ENCODE measurements at regions of chr5 and their contacts with region 1.

Region 1: DNA sequence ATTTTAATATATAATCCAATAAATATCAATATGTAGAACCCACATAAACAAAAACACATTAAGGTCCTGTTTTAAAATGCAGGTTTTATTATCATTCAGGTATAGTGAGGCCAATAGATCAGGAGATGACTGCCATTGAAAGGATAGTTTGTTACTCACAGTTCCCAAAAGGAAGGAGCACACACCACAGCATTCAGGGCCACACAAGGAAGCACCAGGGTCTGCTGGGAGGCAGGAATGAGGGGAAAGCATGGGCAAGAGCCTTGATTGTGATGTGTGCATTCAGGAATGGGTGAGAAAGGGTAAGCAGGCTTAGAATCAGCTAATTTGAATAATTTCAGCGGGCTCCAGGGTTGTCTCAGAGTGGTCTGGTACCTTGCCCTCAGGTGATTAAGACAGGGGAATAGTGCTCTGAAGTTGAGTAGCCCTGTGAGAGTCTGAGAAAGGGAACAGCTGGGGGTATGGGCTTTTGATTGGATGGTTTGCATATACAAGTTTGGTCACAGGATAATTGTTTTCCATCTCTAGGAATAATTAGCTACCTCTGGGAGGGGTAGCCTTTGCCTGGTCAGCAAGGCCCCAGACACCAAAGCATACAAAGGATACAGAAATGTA is 19.8 kb upstream of the OTULIN start:
- DNase-seq: no peak
- ATAC-seq: peak; percentile 74
- H3K4me3 Mint-ChIP-seq: no peak overlapping the region
- H3K27ac Mint-ChIP-seq: peak overlapping the region; percentile 71; the same call in 1 of the 2 replicates
- H3K4me1 Mint-ChIP-seq: peaks cover 10% of the 10 kb centered on the region
- H3K27me3 Mint-ChIP-seq: no peaks in the 10 kb centered on the region
- CTCF ChIP-seq: no peak

Region 2: GRCh38 chr5:13976867-13977830 is 667.6 kb before region 1 on chr5:
- CTCF ChIA-PET with region 1: interaction called, 11 read pairs
- POLR2A ChIA-PET with region 1: no interaction called
- DNase-seq: no peak
- ATAC-seq: peak; percentile 87
- H3K4me3 Mint-ChIP-seq: no peak overlapping the region
- H3K27ac Mint-ChIP-seq: no peak overlapping the region
- H3K4me1 Mint-ChIP-seq: 0 out of 2 replicates have a peak, but pooled peaks cover 6% of the 10 kb centered on the region
- H3K27me3 Mint-ChIP-seq: no peaks in the 10 kb centered on the region; the same call in 1 of the 2 replicates
- CTCF ChIP-seq: no peak

Region 3: GRCh38 chr5:14351845-14352712 is 292.7 kb before region 1 on chr5:
- CTCF ChIA-PET with region 1: interaction called, 29 read pairs
- POLR2A ChIA-PET with region 1: no interaction called
- DNase-seq: peak; percentile 64
- ATAC-seq: peak; percentile 93
- H3K4me3 Mint-ChIP-seq: no peak overlapping the region
- H3K27ac Mint-ChIP-seq: no peak overlapping the region
- H3K4me1 Mint-ChIP-seq: peaks cover 29% of the 10 kb centered on the region
- H3K27me3 Mint-ChIP-seq: no peaks in the 10 kb centered on the region
- CTCF ChIP-seq: peak; percentile 93

Region 4: DNA sequence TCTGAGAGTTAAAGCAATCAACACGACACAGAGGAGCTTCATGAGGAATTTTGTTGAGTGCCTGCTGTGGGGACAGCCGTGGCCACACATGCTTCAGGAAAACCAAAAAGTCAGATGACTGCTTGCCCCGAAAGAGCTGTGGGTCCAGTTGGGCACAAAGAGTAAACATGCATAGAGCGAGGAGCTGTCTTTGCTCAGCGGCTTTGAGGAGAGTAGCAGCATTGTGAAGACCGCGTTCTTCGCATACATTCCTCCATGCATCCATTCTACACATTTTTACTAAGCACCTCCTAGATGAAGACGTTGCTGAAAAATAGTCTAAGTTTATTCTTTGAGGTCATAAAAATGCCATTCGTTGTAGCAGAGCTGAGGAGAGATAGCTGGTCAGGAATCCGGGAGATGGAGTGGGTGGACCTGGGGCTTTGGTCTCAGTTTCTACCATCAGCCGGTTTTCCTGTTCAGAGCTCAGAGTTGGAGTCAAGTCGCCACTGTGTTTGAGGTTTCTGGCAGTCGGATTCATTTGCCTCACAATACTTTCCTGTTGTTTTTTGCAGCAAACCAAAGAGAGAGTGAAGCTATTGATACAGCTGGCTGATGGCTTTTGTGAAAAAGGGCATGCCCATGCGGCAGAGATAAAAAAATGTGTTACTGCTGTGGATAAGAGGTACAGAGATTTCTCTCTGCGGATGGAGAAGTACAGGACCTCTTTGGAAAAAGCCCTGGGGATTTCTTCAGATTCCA is 257.7 kb before region 1 on chr5:
- CTCF ChIA-PET with region 1: interaction called, 11 read pairs
- POLR2A ChIA-PET with region 1: no interaction called
- DNase-seq: no peak
- ATAC-seq: peak; percentile 72
- H3K4me3 Mint-ChIP-seq: no peak overlapping the region
- H3K27ac Mint-ChIP-seq: peak overlapping the region; percentile 74
- H3K4me1 Mint-ChIP-seq: peaks cover 32% of the 10 kb centered on the region
- H3K27me3 Mint-ChIP-seq: no peaks in the 10 kb centered on the region
- CTCF ChIP-seq: no peak

Region 5: DNA sequence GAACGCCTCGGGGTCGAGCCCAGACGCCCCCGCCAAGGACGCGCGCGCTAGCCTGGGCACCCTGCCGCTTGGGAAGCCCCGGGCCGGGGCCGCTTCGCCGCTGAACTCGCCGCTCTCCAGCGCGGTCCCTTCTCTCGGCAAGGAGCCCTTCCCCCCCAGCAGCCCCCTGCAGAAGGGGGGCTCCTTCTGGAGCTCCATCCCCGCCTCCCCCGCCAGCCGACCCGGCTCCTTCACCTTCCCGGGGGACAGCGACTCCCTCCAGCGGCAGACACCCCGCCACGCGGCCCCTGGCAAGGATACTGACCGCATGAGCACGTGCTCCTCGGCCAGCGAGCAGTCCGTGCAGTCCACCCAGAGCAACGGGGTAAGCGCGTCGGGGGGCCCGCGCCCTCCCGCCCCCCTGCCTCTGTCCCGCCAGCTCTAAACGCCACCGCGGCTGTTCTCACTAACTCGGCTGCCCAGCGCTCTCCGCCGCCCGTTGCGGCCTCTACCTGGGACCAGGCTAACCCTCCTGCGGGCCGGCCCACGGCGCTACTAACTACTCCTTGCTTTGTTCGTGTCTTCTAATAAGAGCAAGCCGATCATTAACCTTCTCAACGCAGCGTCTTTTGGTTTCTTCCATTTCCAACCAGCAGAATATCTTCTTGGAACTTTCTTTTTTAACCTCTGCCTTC is 156.7 kb before region 1 on chr5:
- CTCF ChIA-PET with region 1: interaction called, 12 read pairs
- POLR2A ChIA-PET with region 1: no interaction called
- DNase-seq: peak; percentile 54
- ATAC-seq: peak; percentile 50
- H3K4me3 Mint-ChIP-seq: peak overlapping the region; percentile 35
- H3K27ac Mint-ChIP-seq: no peak overlapping the region
- H3K4me1 Mint-ChIP-seq: peaks cover 5% of the 10 kb centered on the region
- H3K27me3 Mint-ChIP-seq: no peaks in the 10 kb centered on the region
- CTCF ChIP-seq: no peak

Region 6: DNA sequence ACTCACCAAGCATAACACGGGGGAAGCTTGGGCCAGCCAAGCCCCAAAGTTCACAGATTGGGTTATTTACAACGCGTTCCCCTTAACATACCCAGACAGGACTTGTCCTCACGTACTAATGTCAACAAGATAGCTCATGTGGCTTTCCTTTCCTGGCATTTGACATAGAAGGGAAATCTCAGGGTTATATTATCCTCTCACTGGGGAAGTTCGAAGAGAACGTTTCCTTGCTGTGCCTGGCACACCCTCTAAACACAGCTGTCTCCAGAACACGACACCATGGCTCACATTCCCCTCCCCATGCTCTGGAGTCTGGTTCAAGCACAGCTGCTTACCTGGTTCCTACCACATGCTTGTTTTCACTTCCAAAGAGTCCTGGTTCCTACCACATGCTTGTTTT is 110.0 kb before region 1 on chr5:
- CTCF ChIA-PET with region 1: interaction called, 12 read pairs
- POLR2A ChIA-PET with region 1: no interaction called
- DNase-seq: no peak
- ATAC-seq: peak; percentile 84
- H3K4me3 Mint-ChIP-seq: no peak overlapping the region
- H3K27ac Mint-ChIP-seq: peak overlapping the region; percentile 64
- H3K4me1 Mint-ChIP-seq: peaks cover 9% of the 10 kb centered on the region
- H3K27me3 Mint-ChIP-seq: no peaks in the 10 kb centered on the region; the same call in 1 of the 2 replicates
- CTCF ChIP-seq: no peak

Region 7: DNA sequence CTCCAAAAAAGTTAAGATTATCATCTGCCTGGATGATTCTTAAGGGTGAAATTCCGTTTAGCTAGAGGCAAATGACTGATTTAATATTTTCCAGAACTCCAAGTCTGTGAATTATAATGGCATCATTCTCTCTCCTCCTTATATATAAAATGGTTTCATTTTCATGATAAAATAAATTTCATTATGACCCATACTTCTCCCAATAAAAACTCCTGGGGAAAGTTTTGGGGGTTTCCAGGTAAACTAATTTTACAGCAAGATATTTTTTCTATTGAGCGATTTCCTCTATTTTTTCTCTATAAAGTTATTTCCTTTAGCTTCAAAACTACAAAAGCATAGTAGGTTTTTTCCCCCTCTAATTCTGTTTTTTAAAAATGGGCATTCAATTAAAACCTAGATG is 12.2 kb after region 1 on chr5:
- CTCF ChIA-PET with region 1: interaction called, 11 read pairs
- POLR2A ChIA-PET with region 1: no interaction called
- DNase-seq: no peak
- ATAC-seq: no peak
- H3K4me3 Mint-ChIP-seq: no peak overlapping the region
- H3K27ac Mint-ChIP-seq: no peak overlapping the region
- H3K4me1 Mint-ChIP-seq: no peaks in the 10 kb centered on the region
- H3K27me3 Mint-ChIP-seq: peaks cover 3% of the 10 kb centered on the region; the same call in 1 of the 2 replicates
- CTCF ChIP-seq: no peak

Region 8: DNA sequence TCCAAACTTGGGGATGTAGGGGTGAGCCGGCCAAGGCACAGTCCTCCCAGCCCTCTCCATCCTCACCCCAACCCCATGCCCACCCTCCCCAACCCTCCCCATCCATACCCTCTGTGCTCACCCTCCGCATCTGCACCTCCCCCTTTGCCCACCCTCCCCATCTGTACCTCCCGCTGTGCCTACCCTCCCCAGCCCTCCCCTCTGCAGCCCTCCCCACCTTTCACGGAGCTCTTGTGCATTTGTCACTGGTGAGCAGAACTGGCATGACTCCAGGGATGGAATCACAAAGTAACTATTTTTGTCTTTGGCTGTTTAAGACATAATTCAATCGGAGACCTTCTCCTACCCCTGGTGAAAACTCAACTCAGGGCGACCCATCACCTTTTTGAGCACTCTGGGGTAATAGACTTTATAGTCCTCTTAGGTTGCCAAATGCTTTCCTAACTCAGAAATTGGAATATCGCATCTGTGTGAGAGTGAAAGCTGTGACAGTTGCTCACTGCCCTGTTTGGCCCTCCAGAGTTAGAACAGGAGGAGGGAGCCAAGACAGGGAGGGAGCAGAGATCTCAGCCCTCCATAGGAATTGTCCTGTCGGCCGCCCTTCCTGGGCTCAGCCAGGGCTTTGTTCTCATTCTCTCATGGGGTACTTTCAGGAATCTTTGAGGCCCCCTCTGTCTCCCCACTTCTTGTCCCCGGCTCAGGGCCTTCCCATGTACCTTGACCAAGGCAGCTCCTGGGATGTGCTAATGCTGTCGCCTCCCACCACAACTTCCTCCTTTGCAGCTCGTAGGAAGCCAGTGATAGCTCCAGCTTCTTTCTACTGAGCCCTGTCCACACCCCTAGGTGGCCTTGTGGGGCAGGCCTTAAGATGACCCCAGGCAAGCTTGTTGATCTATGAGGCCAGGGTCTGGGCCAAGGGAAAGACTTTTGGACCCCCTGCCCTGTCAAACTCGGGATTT is 56.0 kb after region 1 on chr5:
- CTCF ChIA-PET with region 1: no interaction called
- POLR2A ChIA-PET with region 1: no interaction called
- DNase-seq: no peak
- ATAC-seq: no peak
- H3K4me3 Mint-ChIP-seq: no peak overlapping the region
- H3K27ac Mint-ChIP-seq: no peak overlapping the region
- H3K4me1 Mint-ChIP-seq: peaks cover 9% of the 10 kb centered on the region
- H3K27me3 Mint-ChIP-seq: no peaks in the 10 kb centered on the region
- CTCF ChIP-seq: no peak

Region 9: DNA sequence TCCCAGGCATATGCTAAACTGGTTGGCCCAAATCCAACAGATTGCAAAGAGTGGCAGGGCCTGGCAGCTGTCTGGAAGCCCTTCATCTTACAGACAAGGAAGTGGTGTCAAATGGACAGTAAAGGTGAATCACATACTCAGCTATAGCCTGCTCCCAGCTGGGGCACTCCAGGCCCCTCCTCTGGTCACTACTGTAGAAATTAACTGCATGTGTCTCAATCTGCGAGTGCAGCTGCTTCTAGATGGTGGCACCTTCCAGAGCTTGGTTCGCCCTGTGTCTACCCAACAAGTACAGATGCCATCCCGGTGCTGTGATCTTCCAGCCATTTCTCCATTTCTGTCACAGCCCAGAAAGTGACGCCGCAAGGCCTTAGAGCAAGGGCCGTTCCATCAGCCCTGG is 70.0 kb after region 1 on chr5:
- CTCF ChIA-PET with region 1: no interaction called
- POLR2A ChIA-PET with region 1: no interaction called
- DNase-seq: no peak
- ATAC-seq: no peak
- H3K4me3 Mint-ChIP-seq: no peak overlapping the region
- H3K27ac Mint-ChIP-seq: no peak overlapping the region
- H3K4me1 Mint-ChIP-seq: no peaks in the 10 kb centered on the region
- H3K27me3 Mint-ChIP-seq: no peaks in the 10 kb centered on the region; the same call in 1 of the 2 replicates
- CTCF ChIP-seq: no peak

Region 10: DNA sequence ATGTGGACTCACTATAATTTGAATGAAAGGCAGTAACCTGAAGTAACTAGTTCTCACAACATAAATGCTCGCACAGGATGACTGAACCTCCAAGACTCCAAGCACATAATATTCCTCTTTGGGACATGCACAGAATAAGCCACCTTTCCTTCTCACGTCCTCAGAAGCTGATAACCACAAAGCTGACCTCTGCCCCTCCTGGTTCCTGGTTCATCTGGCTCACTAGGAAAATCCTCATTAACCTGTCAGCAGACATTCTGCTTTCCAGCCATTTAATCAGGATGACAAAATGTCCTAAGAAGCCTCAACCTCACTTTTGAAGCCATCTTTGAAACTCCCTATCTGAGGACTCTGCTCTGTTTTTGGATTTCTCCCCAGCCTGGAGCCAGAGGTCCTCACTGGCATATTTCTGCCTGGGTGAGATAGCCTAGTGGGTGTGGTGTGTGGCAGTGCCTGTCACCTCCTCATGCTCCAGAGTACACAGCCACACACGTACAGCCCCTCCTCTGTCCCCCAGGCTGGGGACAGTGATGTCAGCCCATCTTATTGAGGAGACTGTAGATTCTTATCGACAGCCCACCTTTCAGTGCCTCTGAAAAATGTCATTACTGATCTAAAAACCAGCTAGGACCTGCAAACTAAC is 216.5 kb after region 1 on chr5:
- CTCF ChIA-PET with region 1: no interaction called
- POLR2A ChIA-PET with region 1: no interaction called
- DNase-seq: no peak
- ATAC-seq: no peak
- H3K4me3 Mint-ChIP-seq: no peak overlapping the region
- H3K27ac Mint-ChIP-seq: no peak overlapping the region
- H3K4me1 Mint-ChIP-seq: peaks cover 5% of the 10 kb centered on the region
- H3K27me3 Mint-ChIP-seq: no peaks in the 10 kb centered on the region
- CTCF ChIP-seq: no peak

Measured in WTC11 (cell line).